A673 (cell line): ENCODE measurements at regions of chr1 and their contacts with region 1.

Region 1: DNA sequence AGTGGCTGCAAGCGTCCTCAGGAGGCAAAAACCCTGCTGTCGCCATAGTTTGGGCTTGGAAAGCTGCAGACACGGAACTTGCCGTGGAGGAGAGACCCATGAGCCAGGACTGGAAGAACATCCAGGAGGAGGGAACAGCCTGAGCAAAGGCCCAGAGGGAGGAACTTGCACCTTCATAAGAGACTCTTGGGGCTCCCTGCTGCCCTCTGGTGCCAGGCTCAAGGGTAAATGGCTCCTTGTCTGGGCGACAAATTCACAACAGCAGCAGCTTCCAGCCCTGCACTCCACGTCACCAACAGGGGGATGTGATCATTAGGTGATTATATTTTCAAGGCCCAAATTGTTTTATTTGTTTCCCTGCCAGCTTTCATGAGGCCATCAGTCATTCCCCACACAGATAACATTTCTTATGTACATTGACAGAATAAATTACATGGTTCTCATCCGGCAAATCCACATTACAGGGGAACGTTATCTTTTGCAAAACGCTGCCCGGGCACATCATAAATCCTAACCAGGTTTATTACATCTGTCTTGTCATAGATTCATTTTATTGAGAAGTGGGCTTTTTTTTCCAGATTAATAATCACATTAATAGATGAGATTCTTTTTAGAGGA is 143.0 kb upstream of the GRIK3 start:
- DNase-seq: peak; percentile 55
- H3K4me3 ChIP-seq: no peak overlapping the region
- H3K27ac ChIP-seq: no peak overlapping the region
- H3K4me1 ChIP-seq: no peaks in the 10 kb centered on the region
- H3K27me3 ChIP-seq: peaks cover 13% of the 10 kb centered on the region
- CTCF ChIP-seq: peak; percentile 51

Region 2: DNA sequence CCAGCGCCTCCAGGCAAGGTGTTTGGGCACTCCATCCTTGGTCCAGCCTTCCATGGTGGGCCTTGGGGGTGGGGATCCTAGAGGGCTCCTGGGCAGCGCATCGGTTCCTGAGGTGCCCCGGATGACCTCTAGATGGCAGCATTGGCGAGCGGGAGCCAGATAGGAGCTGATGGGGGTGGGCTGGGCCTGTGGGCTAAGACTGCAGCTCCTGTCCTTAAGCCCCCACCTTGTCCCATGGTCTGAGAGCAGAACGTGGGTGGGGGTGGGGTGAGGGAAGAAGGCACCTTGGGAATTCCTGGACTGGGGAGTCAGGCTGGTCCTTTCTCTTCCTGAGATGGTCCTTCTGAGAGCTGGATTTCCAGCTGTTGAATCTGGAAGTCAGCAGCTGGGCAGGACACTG is 601.2 kb before region 1 on chr1:
- CTCF ChIA-PET with region 1: interaction called, 3 read pairs
- POLR2A ChIA-PET with region 1: no interaction called
- intact Hi-C with region 1: loop called (anchors 10 kb)
- DNase-seq: peak; percentile 69
- H3K4me3 ChIP-seq: no peak overlapping the region
- H3K27ac ChIP-seq: no peak overlapping the region
- H3K4me1 ChIP-seq: no peaks in the 10 kb centered on the region
- H3K27me3 ChIP-seq: peaks cover 17% of the 10 kb centered on the region
- CTCF ChIP-seq: peak; percentile 94

Region 3: DNA sequence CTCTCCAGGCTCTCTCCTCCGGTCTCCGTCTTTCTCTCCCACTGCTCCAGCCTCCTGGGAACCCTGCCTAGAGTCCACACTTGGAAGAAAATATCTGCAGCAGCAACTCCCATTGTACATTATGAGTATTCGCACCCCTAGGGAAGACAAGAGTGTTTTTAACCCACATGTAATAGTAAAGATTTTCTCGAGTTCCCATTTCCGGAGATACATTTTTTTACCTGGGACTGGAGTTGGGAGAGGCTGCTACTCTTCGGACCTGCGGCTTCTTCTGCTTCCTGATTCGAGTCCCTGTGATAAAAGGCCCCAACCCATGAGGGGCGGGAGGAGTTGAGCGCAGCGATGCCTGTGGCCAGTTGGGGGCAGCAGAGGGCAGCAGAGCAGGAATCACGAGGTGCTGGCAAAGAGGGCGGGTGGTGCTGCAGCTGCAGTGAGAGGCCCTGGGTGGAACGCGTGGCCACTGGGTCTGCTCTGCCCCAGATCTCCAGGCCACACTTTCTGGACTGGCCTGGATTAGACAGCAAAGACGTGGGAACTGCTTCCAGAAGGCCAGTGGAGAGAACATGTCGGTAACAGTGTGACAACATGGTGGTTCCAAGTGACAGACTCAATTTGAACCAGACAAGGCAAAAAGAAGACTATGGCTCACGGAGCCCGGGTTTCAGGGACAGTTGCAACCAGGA is 473.7 kb before region 1 on chr1:
- CTCF ChIA-PET with region 1: no interaction called
- POLR2A ChIA-PET with region 1: no interaction called
- intact Hi-C with region 1: loop called (anchors 5 kb)
- DNase-seq: peak; percentile 80
- H3K4me3 ChIP-seq: no peak overlapping the region
- H3K27ac ChIP-seq: no peak overlapping the region
- H3K4me1 ChIP-seq: no peaks in the 10 kb centered on the region
- H3K27me3 ChIP-seq: peaks cover 21% of the 10 kb centered on the region
- CTCF ChIP-seq: peak; percentile 96